Activated CD4-positive, alpha-beta memory T cell treated with anti-CD3 and anti-CD28 coated beads for 36 hours (primary cell): ENCODE measurements at regions of chr19 and their contacts with region 1.

Region 1: DNA sequence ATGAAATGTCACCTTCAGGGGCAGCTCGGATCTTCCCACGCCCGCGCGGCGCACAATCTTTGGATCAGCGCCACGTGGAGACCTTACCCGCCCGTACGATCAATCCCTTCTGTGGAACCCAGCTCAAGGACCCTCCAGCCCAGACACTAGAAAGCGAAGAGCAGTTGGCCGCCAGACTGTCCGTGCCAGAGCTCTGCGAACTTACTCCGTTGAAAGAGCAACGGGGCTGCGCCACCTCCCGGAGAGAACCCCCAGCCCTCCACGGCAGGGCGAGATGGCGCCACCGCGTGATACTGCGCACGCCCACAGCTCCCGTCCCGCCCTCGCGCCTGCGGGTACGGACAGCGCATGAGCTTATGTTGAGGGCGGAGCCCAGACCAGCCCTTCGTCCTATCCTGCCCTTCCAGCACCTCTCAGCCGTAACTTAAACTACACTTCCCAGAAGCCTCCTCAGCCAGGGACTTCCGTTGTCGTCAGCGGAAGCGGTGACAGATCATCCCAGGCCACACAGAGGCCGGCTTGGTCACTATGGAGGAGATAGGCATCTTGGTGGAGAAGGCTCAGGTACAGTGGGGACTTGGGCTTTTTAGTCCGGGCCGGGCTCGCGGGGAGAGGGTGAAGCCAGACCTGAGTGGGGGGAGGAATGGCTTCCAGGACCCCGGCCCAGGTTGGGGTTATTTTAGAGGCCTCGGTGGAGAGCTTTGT is at the start of gene PSMC4:
- DNase-seq: peak; percentile 99
- H3K4me3 Mint-ChIP-seq: peak within 1 kb of the TSS; percentile 95
- H3K27ac Mint-ChIP-seq: peak within 1 kb of the TSS; percentile 98
- H3K4me1 Mint-ChIP-seq: peaks cover 51% of the 10 kb centered on the region
- H3K27me3 Mint-ChIP-seq: no peaks in the 10 kb centered on the region
- total RNA-seq, gene PSMC4: 105 to 107 TPM

Region 2: GRCh38 chr19:39846176-39846677 is 124.6 kb before region 1 on chr19 and contains the start of gene FBL:
- CTCF ChIA-PET with region 1: interaction called, 23 read pairs
- POLR2A ChIA-PET with region 1: interaction called, 17 read pairs
- intact Hi-C with region 1: no loop called
- DNase-seq: peak; percentile 98
- H3K4me3 Mint-ChIP-seq: peak within 1 kb of the TSS; percentile 94
- H3K27ac Mint-ChIP-seq: peak within 1 kb of the TSS; percentile 90
- H3K4me1 Mint-ChIP-seq: peaks cover 45% of the 10 kb centered on the region
- H3K27me3 Mint-ChIP-seq: no peaks in the 10 kb centered on the region
- total RNA-seq, gene FBL: 579 to 589 TPM

Region 3: GRCh38 chr19:39941615-39942365 is 29.0 kb before region 1 on chr19:
- CTCF ChIA-PET with region 1: interaction called, 24 read pairs
- POLR2A ChIA-PET with region 1: interaction called, 13 read pairs
- intact Hi-C with region 1: loop called (anchors 1 kb)
- DNase-seq: peak; percentile 59
- H3K4me3 Mint-ChIP-seq: peak overlapping the region; percentile 43
- H3K27ac Mint-ChIP-seq: peak overlapping the region; percentile 70
- H3K4me1 Mint-ChIP-seq: peaks cover 69% of the 10 kb centered on the region
- H3K27me3 Mint-ChIP-seq: no peaks in the 10 kb centered on the region

Region 4: DNA sequence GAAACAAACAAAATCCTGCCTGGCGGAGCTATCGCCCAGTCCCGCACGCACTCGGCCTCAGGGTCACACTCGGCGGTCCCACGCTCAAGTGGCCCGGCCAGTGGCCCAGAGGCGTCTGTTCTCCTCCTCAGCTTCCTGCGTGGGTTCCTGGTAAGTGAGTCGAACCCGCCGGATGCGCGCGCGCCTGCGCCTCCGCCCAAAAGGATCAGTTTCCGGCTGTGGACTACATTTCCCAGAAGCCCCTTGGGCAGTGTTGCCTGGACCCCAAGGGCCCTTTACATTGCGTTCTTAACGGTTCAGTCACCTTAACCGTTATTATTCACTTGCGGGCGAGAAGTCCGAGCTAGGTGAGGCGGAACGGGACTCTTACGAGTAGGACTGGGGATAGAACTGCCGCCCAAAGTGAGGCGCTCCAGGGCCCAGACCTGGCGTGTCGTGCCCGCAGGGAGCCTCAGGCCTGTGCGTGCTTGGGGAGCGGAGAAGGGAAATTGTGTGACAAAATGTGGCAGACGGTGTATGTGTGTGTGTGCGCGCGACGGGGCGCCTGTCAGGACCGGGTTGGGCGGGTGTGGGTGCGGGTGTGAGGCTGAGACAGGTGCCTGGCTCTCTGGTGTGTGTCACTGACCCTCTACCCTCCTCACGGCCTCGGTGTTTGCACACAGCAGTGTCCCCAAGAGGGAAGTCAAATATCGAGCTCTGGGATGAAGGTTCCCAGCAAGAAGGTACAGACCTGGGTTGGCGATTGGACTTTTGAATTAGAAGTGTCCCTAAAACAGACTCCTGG is 26.2 kb after region 1 on chr19 and contains the start of gene ZNF546:
- CTCF ChIA-PET with region 1: interaction called, 17 read pairs
- POLR2A ChIA-PET with region 1: interaction called, 31 read pairs
- intact Hi-C with region 1: loop called (anchors 1 kb)
- DNase-seq: peak; percentile 95
- H3K4me3 Mint-ChIP-seq: peak within 1 kb of the TSS; percentile 98
- H3K27ac Mint-ChIP-seq: peak within 1 kb of the TSS; percentile 95
- H3K4me1 Mint-ChIP-seq: peaks cover 36% of the 10 kb centered on the region
- H3K27me3 Mint-ChIP-seq: no peaks in the 10 kb centered on the region
- total RNA-seq, gene ZNF546: 4.2 to 5.5 TPM